HCT116 (cell line): ENCODE measurements at regions of chr22 and their contacts with region 1.

Region 1: GRCh38 chr22:46013460-46014416 is 36.8 kb upstream of the WNT7B start:
- DNase-seq: peak; percentile 89
- ATAC-seq: peak; percentile 95
- H3K4me3 ChIP-seq: peak overlapping the region; percentile 53 to 73
- H3K27ac ChIP-seq: peak overlapping the region; percentile 100
- H3K4me1 ChIP-seq: peaks cover 20 to 33% of the 10 kb centered on the region in 2 experiments
- H3K27me3 ChIP-seq: no peaks in the 10 kb centered on the region
- CTCF ChIP-seq: peak in 2 of 3 experiments; percentile 70 to 77; a peak in 4 of 6 replicates
- POLR2A ChIP-seq: peak; percentile 55
- RAD21 ChIP-seq: no peak

Region 2: DNA sequence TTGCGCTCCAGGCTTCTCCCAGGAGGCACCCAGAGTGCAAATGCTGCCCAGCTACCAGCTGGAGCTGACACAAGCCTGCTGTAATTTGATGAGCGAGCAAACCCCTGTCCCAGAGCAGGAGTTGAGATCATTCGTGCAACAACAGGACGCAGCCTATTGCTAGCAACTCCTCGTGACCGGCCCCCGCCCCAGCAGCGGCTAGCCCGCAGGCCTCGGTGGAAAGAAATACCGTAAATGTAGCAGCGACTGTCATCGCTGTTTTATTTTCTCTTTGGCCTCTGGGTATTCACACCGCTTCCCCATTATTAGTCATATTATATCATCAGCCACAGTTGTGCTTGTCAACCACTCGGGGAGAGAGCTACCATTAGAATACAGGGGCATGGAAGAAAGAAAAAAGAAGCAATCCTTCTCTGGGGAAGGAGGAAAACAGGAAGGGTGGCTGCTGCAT is 401.3 kb before region 1 on chr22:
- CTCF ChIA-PET with region 1: no interaction called
- POLR2A ChIA-PET with region 1: no interaction called
- RAD21 ChIA-PET with region 1: no interaction called
- intact Hi-C with region 1: no loop called
- DNase-seq: no peak
- ATAC-seq: no peak
- H3K4me3 ChIP-seq: no peak overlapping the region
- H3K27ac ChIP-seq: no peak overlapping the region
- H3K4me1 ChIP-seq: peaks cover 10 to 26% of the 10 kb centered on the region in 2 experiments
- H3K27me3 ChIP-seq: no peaks in the 10 kb centered on the region
- CTCF ChIP-seq: no peak
- POLR2A ChIP-seq: no peak
- RAD21 ChIP-seq: no peak

Region 3: GRCh38 chr22:46035742-46036557 is 22.2 kb after region 1 on chr22:
- CTCF ChIA-PET with region 1: interaction called, 5 read pairs
- POLR2A ChIA-PET with region 1: interaction called, 11 read pairs
- RAD21 ChIA-PET with region 1: interaction called, 5 read pairs
- intact Hi-C with region 1: loop called (anchors 1 kb)
- DNase-seq: peak; percentile 96
- ATAC-seq: peak; percentile 93
- H3K4me3 ChIP-seq: peak overlapping the region; percentile 93 to 98
- H3K27ac ChIP-seq: peak overlapping the region; percentile 73
- H3K4me1 ChIP-seq: peaks cover 8 to 21% of the 10 kb centered on the region in 2 experiments; a peak in 3 of 4 replicates
- H3K27me3 ChIP-seq: no peaks in the 10 kb centered on the region
- CTCF ChIP-seq: no peak
- POLR2A ChIP-seq: peak; percentile 51
- RAD21 ChIP-seq: no peak

Region 4: DNA sequence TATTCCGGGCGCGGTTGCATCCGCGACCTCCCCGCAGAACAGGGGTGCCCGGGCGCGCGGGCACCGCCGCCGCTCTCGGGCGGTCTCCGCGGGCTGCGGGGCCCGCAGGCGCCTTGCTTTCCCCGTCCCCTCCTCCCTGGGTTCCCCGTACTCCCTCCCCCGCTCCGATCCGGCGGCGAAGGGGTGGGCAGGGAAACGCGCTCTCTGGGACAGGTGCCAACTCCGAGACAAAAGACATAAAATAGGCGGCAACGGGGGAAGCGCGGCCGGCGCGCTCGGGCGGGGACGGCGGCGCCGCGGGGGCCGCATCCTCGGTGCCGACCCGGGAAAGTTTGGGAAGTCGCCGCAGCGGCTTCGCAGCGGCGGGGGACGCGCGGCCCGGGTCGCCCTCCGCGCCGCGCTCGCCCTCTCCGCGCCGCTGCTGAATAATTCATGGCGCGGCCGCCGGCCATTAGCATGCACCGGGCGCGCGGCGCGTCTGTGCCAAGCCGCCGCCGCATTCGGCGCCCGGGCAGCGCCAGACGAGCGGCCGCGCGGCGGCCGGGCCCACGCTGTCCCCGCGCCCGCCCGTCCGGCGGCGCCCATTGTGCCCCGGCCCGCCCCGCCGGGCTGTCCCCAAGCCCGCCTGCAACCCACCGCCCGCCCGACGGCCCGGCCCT is 57.8 kb after region 1 on chr22:
- CTCF ChIA-PET with region 1: no interaction called
- POLR2A ChIA-PET with region 1: interaction called, 4 read pairs
- RAD21 ChIA-PET with region 1: no interaction called
- intact Hi-C with region 1: loop called (anchors 1 kb)
- DNase-seq: peak; percentile 80
- ATAC-seq: peak; percentile 49
- H3K4me3 ChIP-seq: peak overlapping the region; percentile 86 to 90
- H3K27ac ChIP-seq: peak overlapping the region; percentile 100
- H3K4me1 ChIP-seq: peaks cover 35 to 64% of the 10 kb centered on the region in 2 experiments
- H3K27me3 ChIP-seq: no peaks in the 10 kb centered on the region
- CTCF ChIP-seq: no peak
- POLR2A ChIP-seq: peak; percentile 53
- RAD21 ChIP-seq: no peak